IMR-90 (cell line): ENCODE measurements at regions of chr22 and their contacts with region 1.

Region 1: GRCh38 chr22:31107178-31107893 is at the start of gene SELENOM:
- DNase-seq: peak; percentile 98
- ATAC-seq: peak; percentile 88
- H3K4me3 ChIP-seq: peak within 1 kb of the TSS; percentile 90
- H3K27ac ChIP-seq: peak within 1 kb of the TSS; percentile 94
- H3K4me1 ChIP-seq: peaks cover 35% of the 10 kb centered on the region
- H3K27me3 ChIP-seq: no peaks in the 10 kb centered on the region
- CTCF ChIP-seq: peak; percentile 99
- POLR2A ChIP-seq: peak; percentile 95
- RAD21 ChIP-seq: peak; percentile 95
- total RNA-seq, gene SELENOM: 36.1 and 46.2 TPM in 2 replicates

Region 2: GRCh38 chr22:31211862-31212730 is 104.8 kb after region 1 on chr22 and contains the start of gene LIMK2:
- CTCF ChIA-PET with region 1: no interaction called
- POLR2A ChIA-PET with region 1: no interaction called
- dilution Hi-C with region 1: no loop called
- in situ Hi-C with region 1: no loop called
- intact Hi-C with region 1: loop called (anchors 5 kb)
- DNase-seq: peak; percentile 73
- ATAC-seq: peak; percentile 99
- H3K4me3 ChIP-seq: peak within 1 kb of the TSS; percentile 80
- H3K27ac ChIP-seq: peak within 1 kb of the TSS; percentile 30
- H3K4me1 ChIP-seq: peaks cover 4% of the 10 kb centered on the region; the same call in 1 of the 2 replicates
- H3K27me3 ChIP-seq: no peaks in the 10 kb centered on the region
- CTCF ChIP-seq: peak; percentile 92
- POLR2A ChIP-seq: no peak
- RAD21 ChIP-seq: peak; percentile 70
- total RNA-seq, gene LIMK2: 25.0 and 31.9 TPM in 2 replicates

Region 3: GRCh38 chr22:31244044-31244942 is 137.0 kb after region 1 on chr22:
- CTCF ChIA-PET with region 1: interaction called, 4 read pairs
- POLR2A ChIA-PET with region 1: interaction called, 10 read pairs
- dilution Hi-C with region 1: no loop called
- in situ Hi-C with region 1: loop called (anchors 10 kb)
- intact Hi-C with region 1: no loop called
- DNase-seq: peak; percentile 80
- ATAC-seq: peak; percentile 66
- H3K4me3 ChIP-seq: no peak overlapping the region
- H3K27ac ChIP-seq: peak overlapping the region; percentile 54
- H3K4me1 ChIP-seq: peaks cover 34% of the 10 kb centered on the region
- H3K27me3 ChIP-seq: no peaks in the 10 kb centered on the region
- CTCF ChIP-seq: no peak
- POLR2A ChIP-seq: no peak
- RAD21 ChIP-seq: no peak

Region 4: GRCh38 chr22:31272522-31273446 is 165.4 kb after region 1 on chr22:
- CTCF ChIA-PET with region 1: no interaction called
- POLR2A ChIA-PET with region 1: no interaction called
- dilution Hi-C with region 1: no loop called
- in situ Hi-C with region 1: no loop called
- intact Hi-C with region 1: loop called (anchors 1 kb)
- DNase-seq: peak; percentile 67
- ATAC-seq: peak; percentile 91
- H3K4me3 ChIP-seq: no peak overlapping the region
- H3K27ac ChIP-seq: no peak overlapping the region
- H3K4me1 ChIP-seq: peaks cover 5% of the 10 kb centered on the region; the same call in 1 of the 2 replicates
- H3K27me3 ChIP-seq: no peaks in the 10 kb centered on the region
- CTCF ChIP-seq: peak; percentile 80
- POLR2A ChIP-seq: no peak
- RAD21 ChIP-seq: peak; percentile 76